AG04449 (cell line): ENCODE measurements at regions of chr10 and their contacts with region 1.

Region 1: DNA sequence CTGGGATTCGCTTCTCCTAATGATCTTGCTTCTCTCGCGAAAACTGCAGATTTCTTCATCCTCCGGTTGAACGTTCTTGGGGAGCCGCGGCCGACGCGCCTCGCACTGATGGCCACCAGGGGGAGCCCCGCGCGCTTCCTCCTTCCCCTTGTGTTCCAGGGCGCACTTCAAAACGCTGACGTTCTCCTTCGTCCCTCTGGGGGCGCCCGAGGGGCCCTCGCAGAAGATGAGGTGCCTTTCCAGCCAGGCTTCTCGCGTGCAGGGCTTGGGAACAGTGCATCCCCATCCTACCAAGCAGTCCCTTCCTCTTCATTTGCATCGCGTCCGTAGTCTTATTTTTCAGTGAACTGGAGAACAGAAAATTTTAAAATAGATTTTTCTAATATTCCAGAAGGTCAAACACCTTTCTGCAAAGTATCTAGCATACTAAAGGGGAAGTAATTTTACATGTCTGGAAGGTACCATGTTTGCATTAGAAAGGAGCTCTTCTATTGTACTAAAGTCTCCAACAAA is 22.5 kb downstream of the GSTO2 start:
- DNase-seq: no peak
- H3K4me3 ChIP-seq: no peak overlapping the region
- CTCF ChIP-seq: peak; percentile 100

Region 2: GRCh38 chr10:104260775-104261115 is 30.8 kb before region 1 on chr10:
- CTCF ChIA-PET with region 1: interaction called, 20 read pairs
- POLR2A ChIA-PET with region 1: no interaction called
- DNase-seq: no peak
- H3K4me3 ChIP-seq: no peak overlapping the region
- CTCF ChIP-seq: no peak

Region 3: GRCh38 chr10:104274762-104275721 is 16.5 kb before region 1 on chr10:
- CTCF ChIA-PET with region 1: interaction called, 557 read pairs
- POLR2A ChIA-PET with region 1: interaction called, 4 read pairs
- DNase-seq: no peak
- H3K4me3 ChIP-seq: peak overlapping the region; percentile 41
- CTCF ChIP-seq: peak; percentile 92

Region 4: DNA sequence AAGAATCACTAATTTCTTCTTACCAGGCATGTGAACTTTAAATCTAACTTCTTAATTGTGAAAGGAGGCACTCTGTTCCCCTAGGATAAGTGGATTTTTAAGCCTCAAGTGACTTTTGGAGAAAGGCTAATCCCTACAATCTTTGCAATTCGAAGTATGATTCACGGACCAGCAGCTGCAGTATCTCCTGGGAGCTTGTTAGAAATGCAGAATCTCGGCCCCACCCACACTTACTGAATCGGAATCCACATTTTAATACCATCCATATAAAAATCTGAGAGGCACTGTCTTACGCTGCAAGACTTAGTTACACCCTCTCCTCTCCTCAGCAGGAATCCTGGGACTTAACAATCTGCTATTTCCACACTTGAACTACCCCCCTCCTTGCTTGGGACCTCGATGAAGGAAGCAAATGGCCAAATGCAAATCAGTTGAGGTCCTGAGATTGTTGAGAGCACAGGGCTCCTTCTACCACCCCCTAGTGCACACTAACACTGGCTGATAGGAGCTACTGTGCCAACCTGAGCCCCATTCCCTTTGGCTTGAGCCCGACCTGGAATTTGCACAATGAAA is 25.8 kb after region 1 on chr10:
- CTCF ChIA-PET with region 1: interaction called, 234 read pairs
- POLR2A ChIA-PET with region 1: no interaction called
- DNase-seq: no peak
- H3K4me3 ChIP-seq: no peak overlapping the region
- CTCF ChIP-seq: no peak

Region 5: DNA sequence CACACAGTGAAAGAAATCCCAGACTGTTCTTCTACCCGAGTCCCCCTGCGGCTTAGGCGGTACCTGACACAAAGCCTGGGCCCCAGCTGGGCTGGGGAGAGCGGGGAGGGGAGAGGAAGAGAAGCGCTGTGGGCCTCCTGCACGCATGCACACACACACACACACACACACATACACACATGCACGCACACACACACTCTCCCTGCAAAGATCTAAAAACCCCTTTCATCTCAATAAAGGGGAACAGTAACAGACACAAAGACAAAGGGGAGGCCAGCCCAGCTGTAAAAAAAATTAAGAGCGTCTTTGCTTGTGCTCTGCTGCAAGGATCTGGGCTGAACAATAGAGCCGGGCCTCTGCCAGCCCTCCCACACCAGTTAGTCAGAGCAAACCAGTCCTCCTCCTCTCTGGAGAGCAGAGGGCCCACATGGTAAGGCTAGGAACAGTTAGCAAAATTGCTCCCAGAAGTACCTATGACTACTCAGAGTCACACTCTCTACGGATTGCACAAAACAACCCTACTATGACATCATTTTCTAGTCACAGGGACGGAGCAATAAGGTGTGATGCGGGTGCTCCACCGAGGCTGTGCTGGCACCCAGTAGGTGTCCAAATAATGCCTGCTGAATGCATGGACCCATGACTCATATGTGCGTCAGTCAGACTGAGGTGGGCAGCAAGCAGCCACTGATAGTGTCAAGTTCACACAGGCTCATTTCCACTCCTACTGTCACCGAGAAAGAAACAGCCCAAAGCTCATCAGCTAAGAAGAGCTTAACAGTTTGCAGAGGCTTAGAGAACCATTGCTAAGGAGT is 37.6 kb after region 1 on chr10:
- CTCF ChIA-PET with region 1: interaction called, 108 read pairs
- POLR2A ChIA-PET with region 1: interaction called, 4 read pairs
- DNase-seq: no peak
- H3K4me3 ChIP-seq: peak overlapping the region; percentile 47
- CTCF ChIP-seq: no peak

Region 6: DNA sequence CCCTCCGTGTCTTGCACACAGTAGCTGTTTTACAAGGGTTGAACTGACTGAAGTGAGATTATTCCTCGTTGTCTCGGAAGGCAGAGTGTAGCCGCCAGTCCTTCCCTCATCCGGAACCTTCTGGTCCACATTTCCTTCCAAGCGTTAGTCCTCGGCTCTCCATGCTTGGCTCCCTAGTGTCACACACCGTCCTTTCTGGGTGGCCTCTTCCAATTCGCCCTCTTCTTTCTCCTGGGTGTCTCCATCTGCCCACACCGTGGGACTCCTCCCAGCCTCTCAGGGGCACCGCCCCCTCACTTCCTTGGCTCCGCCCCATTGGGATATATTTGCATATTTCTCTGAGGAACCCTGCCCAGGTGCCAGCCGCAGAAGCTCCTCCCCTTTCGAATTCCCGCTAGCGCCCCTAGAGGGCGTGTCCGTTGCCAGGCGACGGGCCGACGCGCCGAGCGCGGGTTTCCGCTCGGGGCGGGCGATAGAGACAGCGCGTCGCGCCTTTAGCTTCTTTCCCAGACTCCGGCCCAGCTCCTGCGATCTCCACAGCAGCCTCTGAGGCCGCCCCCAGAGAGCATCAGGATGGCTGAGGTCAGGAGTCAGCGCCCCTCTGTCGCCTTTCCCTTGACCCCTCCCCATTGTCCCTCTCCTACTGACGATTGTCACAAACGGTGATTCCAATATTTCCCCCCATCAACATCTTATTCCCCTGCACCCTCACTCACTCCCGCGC is 62.0 kb after region 1 on chr10 and contains the start of gene CFAP58:
- CTCF ChIA-PET with region 1: interaction called, 659 read pairs
- POLR2A ChIA-PET with region 1: interaction called, 3 read pairs
- DNase-seq: no peak
- H3K4me3 ChIP-seq: peak within 1 kb of the TSS; percentile 63
- CTCF ChIP-seq: peak; percentile 76

Region 7: DNA sequence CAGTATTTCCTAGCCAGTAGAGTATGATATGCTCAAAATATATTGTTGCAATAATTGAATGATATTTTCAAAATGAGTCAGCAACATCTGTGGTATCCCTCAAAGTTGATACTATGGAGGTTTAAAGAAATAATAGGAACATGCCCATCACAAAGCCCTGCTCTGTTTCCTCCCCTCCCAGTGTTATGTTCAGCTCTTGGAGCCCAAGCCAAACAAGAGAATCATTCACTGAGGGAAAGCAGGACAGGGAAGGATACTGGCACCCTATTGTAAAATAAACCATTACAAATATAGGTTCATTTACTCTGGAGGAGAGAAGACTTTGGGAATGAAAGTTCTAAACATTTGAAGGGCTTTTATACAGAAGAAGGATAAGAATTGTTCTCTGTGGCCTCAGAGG is 387.2 kb after region 1 on chr10:
- CTCF ChIA-PET with region 1: no interaction called
- POLR2A ChIA-PET with region 1: no interaction called
- DNase-seq: no peak
- H3K4me3 ChIP-seq: no peak overlapping the region
- CTCF ChIP-seq: no peak